Gastrocnemius medialis (tissue), 4 donors: ENCODE measurements at regions of chr3 and their contacts with region 1.

Region 1: DNA sequence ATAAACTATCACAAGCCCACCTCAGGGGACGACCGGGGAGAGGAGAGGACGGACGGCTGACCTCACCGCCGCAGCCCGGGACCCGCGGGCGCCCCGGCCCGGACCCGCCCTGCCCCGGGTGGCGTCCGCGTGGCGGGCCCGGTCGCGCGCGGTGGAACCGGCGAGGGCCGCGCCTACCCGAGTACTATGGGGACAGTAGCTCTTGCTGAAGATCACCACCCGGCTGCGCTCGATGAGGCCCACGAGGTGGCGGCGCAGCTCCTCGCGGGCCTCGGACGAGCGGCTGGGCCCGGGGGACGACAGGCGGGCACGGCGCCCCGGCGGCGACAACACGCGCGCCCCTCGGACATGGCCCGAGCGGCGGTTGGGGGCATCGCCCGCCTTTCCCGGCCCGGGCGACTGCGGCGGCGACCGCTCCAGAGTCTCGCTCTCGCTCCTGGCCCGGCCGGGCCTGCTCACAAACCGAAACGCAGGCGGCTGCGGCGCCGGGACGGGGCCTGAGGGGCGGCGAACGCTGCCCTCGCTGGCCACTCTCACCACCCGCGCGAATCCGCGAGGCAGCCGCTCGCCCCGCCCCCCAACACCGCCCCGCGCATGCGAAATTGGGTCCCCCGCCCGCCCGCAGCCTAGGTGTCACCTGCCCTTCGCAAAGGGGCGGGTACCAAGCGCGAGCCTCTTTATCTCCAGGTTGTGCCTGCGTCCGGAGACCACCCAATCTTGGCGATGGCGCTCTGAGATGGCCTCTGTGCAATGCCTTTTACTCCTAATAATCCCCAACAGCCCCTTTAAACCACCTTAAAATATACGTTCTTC is at the start of gene TXNRD3:
- DNase-seq: peak; percentile 76 to 80
- ATAC-seq: peak; percentile 89 to 92
- H3K4me3 ChIP-seq: peak within 1 kb of the TSS; percentile 49 to 77 (median 56)
- H3K27ac ChIP-seq: peak within 1 kb of the TSS; percentile 74 to 91 (median 82)
- H3K4me1 ChIP-seq: peaks cover 7 to 10% of the 10 kb centered on the region in 2 donors
- H3K27me3 ChIP-seq: no peaks in the 10 kb centered on the region
- CTCF ChIP-seq: peak in 1 of 5 experiments; percentile 13
- POLR2A ChIP-seq: peak; percentile 81 to 86
- total RNA-seq, gene TXNRD3: 2.5 to 7.0 (median 4.5) TPM

Region 2: DNA sequence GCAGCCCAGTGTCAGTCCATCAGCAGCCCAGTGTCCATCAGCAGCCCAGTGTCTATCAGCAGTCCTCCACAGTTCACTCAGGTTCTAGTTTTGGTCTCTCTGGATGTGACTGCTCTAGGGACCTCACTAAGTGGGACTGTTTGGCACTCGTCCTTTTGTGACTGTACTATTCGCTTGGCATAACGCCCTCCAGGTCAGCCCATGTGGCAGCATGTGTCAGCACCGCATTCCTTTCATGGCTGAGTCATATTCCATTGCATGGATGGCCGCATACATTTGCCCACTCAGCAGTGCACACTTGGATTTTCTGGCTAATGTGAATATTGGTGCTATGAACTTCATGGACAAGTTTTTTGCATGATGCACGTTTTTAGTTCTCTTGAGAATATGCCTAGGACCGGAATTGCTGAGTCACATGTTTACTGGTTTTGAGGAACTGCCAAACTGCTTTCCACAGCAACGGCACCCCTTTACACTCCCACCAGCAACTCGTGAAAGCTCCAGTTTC is 114.4 kb before region 1 on chr3:
- in situ Hi-C with region 1: no loop called
- intact Hi-C with region 1: no loop called
- DNase-seq: peak; percentile 1 to 50
- ATAC-seq: peak; percentile 51 to 74
- H3K4me3 ChIP-seq: no peak overlapping the region
- H3K27ac ChIP-seq: no peak overlapping the region
- H3K4me1 ChIP-seq: peaks cover 0 to 8% of the 10 kb centered on the region in 2 donors
- H3K27me3 ChIP-seq: peaks cover 13 to 21% (median 16%) of the 10 kb centered on the region in 3 donors
- CTCF ChIP-seq: no peak
- POLR2A ChIP-seq: no peak

Region 3: DNA sequence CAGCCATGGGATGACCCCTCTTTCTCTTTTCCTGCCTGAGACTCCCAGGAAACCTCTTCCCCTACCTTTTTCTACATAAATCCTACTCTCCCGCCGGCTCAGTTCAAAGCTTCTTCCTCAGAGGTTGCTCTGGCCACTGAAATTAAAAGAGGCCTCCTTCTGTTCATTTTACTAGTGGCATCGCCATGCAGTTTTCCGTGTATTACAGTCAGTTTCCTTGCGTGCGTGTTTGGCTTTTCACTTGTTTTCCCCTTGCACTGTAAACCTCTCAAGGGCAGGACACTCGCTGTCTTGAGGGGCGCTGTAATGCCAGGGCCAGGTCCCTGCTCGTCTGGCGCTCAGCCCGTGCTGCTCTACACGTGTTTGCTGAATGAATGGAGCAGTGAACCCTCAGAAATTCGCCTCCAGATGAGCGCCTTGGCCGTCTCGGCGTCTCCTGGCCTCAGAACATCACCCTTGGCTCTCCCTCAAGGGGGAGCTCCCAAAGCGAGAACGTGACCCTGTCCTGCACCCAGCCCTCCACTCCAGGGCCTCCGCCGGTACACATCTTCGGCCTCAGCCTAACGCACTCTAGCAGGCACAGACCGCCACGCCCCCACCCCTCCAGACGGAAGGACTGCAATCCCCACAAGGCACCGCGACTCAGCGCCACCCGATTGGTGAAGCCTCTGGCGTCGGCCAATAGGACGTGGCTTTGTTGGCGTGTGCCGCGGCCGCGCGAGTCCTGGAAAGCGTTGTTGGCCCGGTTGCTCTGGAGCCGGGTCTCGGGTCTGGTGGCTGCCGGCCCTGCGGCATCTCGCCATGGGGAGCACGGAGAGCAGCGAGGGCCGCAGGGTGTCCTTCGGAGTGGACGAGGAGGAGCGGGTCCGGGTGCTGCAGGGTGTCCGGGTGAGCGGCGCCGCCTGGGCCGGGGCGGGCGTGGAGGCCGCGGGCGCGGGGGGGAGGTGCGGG is 49.0 kb after region 1 on chr3 and contains the start of gene CHCHD6:
- in situ Hi-C with region 1: no loop called
- intact Hi-C with region 1: loop called (anchors 1 kb)
- DNase-seq: peak; percentile 88 to 89
- ATAC-seq: peak; percentile 98 to 99
- H3K4me3 ChIP-seq: peak within 1 kb of the TSS; percentile 64 to 83 (median 72)
- H3K27ac ChIP-seq: peak within 1 kb of the TSS in 3 of 4 donors; percentile 11 to 65 (median 21)
- H3K4me1 ChIP-seq: peaks cover 2 to 14% of the 10 kb centered on the region in 2 donors
- H3K27me3 ChIP-seq: peaks cover 0 to 4% (median 3%) of the 10 kb centered on the region in 3 donors
- CTCF ChIP-seq: no peak
- POLR2A ChIP-seq: no peak
- total RNA-seq, gene CHCHD6: 2.7 to 4.2 (median 3.4) TPM